RWPE1 (cell line): ENCODE measurements at regions of chr20 and their contacts with region 1.

Region 1: DNA sequence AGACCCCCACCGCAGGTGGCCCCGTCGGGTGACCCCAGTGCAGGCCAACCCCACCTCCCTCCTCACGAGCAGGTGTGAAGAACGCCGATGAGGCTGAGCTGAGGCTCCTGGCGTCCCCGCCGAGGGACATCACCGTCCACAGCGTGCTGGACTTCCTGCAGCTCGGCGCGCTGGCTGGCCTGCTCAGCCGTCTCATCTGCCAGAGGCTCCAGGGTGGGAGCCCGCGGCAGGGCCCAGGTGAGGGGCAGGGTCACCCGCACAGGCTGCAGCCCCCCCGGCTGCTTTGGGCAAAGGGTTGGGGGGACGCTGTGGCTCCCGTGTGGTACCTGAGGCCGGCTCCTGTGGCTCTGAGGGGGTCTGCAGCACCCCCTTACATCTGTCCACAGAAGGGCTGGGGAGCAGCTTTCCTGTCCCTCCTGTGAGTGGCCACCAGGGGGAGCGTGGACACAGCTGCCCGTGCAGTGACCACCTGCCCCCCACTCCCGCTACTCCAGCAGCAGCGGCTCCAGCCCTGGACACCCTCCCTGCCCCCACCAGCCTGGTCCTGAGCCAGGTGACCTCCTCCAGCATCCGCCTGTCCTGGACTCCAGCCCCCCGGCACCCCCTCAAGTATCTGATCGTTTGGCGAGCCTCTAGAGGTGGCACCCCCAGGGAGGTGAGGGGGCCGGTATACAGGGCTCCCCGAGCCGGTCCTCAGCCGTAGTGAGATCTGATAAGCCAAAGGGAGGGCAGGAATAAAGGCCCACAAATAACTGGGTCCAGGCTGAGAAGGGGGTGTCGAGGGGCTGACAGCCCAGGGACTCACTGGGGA is 16.5 kb downstream of the COL20A1 start:
- DNase-seq: peak; percentile 78
- H3K27ac ChIP-seq: no peak overlapping the region
- CTCF ChIP-seq: peak; percentile 97

Region 2: DNA sequence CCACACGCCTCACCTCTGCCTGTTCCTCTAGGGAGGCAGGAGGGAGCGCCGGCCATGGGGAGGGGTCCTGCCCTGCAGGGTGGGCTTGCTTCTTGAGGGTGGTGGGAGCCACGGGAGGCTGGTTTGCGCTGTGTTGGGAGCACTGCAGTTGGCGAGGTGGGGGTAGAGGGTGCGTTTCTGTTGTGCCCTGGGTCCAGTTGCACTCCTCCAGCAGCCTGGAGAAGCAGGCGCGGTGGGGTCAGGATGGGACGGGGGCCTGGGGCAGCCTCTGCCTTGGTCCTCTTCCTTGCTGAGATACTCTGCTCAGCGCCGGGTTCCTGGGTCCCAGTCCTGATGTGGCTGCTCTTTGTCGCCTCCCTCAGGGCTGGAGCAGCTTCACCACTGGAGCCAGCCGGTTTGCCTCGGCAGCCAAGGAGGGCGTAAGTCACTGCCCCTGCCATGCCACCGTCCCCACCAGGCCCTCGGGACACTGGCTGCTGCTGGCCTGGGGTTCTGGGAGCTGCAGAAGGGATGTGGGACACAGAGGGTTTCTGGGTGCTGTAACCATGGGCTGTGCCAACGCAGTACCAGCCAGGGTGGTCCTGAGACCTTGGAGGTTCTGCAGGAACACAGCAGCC is 28.4 kb before region 1 on chr20:
- CTCF ChIA-PET with region 1: interaction called, 11 read pairs
- POLR2A ChIA-PET with region 1: no interaction called
- DNase-seq: no peak
- H3K27ac ChIP-seq: no peak overlapping the region
- CTCF ChIP-seq: peak; percentile 46

Region 3: DNA sequence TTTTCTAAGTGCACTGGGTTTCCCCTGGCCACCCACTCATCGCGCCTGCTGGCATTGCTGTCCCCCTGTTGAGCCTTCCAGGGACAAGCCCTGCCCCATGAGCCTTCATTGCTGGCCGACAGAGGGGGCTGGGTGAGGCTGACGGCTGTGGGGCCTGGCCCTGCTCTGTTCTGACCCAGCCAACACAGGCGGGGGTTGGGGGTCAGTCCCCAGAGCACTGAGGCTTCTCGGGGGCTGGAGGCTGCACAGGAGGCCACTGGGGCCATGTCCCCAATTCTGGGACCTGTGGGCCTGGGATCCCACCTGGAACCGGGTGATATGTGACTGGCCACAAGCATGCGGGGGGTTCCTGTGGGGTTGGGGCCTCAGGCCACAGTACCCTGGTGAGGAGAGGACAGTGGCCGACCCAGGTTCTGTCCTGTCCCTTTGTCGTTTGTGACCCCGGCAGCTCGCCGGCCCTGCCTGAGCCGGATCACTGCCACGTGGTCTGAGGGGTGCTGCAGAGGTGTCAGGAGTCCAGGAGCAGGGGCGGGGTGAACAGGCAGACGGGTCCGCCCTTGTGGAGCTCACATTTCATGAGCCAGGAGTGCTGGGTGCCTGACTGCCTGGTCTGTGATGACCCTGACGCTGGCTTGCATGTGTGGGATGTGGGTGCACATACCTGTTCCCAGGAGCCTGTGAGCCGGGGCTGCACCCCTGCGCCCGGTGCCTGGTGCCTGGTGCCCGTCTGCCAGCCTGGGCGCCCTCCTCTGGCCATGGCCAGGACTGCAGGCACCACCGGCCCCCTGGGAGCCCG is 18.6 kb before region 1 on chr20:
- CTCF ChIA-PET with region 1: interaction called, 37 read pairs
- POLR2A ChIA-PET with region 1: no interaction called
- DNase-seq: peak; percentile 80
- H3K27ac ChIP-seq: no peak overlapping the region
- CTCF ChIP-seq: peak; percentile 90

Region 4: DNA sequence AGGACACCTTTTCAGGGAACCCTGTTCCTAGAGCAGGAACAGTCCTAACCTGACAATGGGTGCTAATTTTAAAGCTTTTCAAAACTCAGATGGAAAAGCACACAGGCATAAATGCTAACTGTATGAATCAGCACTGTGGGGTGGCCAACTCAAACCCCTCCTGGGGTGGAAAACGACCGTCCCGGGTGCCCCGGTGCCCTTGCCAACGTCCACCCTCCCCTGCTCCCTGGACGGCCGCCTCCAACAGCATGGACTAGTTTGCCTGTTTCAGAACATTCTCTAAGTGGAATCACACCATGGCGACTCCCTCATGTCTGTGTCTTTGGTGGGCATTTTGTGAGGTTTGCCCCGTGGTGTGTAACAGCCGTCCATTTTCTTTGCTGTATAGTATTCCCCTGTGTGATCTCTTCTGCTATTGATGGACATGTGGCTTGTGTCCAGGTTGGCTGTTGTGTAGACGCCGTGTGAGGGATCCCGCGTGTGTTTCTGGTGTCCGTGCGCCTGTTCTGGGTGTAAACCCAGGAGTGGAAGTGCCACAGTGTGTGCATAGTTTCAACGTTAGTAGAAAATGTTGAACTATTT is 10.6 kb before region 1 on chr20:
- CTCF ChIA-PET with region 1: interaction called, 37 read pairs
- POLR2A ChIA-PET with region 1: no interaction called
- DNase-seq: no peak
- H3K27ac ChIP-seq: no peak overlapping the region
- CTCF ChIP-seq: no peak

Region 5: GRCh38 chr20:63333241-63333836 is 23.9 kb after region 1 on chr20:
- CTCF ChIA-PET with region 1: interaction called, 13 read pairs
- POLR2A ChIA-PET with region 1: no interaction called
- DNase-seq: peak; percentile 54
- H3K27ac ChIP-seq: no peak overlapping the region
- CTCF ChIP-seq: no peak; the same call in 1 of the 2 replicates

Region 6: GRCh38 chr20:63381807-63382322 is 72.4 kb after region 1 on chr20:
- CTCF ChIA-PET with region 1: interaction called, 178 read pairs
- POLR2A ChIA-PET with region 1: no interaction called
- DNase-seq: peak; percentile 68
- H3K27ac ChIP-seq: no peak overlapping the region
- CTCF ChIP-seq: peak; percentile 97

Region 7: DNA sequence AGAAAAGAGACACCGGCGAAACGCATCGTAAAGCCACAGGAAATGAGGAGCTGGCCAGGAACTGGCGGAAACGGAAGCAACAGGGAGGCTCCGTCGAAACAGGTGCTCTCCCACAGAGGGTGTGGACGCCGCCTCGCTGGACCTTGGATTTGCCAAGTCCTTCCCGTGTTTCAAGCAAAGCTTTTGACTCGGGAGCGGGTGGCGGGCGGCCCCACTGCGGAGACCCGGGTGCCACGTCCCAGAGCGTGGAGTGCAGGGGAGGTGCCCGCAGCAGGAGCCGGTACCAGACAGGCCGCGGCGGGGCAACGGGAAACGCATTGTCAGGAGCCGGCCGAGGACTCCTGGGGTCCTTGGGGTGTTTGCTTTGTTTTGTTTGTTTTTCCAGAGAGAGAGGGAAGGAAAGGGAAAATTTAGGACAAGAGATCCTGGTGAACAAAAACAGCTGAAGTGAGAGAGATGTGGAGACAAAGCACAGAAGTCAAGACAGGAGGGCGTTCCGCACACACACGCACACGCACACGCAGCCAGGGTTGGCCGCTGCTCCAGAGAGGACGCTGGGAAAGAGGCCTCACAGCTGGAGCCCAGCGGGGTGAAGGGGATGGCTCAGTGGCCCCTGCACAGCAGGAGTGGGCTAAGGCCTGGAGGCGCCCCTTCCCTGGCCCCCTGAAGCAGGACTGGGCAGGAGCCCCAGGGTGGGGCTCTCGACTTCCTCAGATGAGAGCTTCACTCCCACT is 102.6 kb after region 1 on chr20:
- CTCF ChIA-PET with region 1: no interaction called
- POLR2A ChIA-PET with region 1: no interaction called
- DNase-seq: no peak
- H3K27ac ChIP-seq: no peak overlapping the region
- CTCF ChIP-seq: no peak